ENCODE measurements at regions of chr20 and their contacts with region 1.

Region 1: GRCh38 chr20:10761232-10761631 is 87.4 kb upstream of the JAG1 start:
- DNase-seq: peak; percentile 97
- H3K4me3 Mint-ChIP-seq: peak overlapping the region; percentile 37
- H3K27ac Mint-ChIP-seq: no peak overlapping the region
- H3K4me1 Mint-ChIP-seq: peaks cover 18% of the 10 kb centered on the region
- H3K27me3 Mint-ChIP-seq: no peaks in the 10 kb centered on the region
- CTCF ChIP-seq: no peak

Region 2: DNA sequence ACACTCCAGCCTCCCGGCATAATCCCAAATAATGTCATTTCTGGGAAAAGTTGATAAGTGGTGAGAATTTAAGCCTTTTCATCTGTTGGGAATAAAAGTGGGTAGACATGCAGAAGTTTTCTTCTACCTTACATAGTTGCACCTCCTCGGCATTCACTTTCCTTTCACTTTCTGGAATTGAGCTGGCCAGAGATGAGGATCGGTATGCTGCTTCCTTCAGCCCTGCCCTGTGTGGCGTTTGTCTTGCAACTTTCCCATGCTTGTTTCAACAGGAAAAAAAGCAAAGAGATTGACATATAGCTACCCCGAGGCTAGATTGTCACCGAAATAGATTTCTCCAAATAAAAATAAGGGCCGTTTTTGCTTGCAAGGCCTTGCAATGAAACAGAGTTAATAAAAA is 21.7 kb before region 1 on chr20:
- CTCF ChIA-PET with region 1: interaction called, 4 read pairs
- POLR2A ChIA-PET with region 1: interaction called, 15 read pairs
- intact Hi-C with region 1: no loop called
- DNase-seq: peak; percentile 56
- H3K4me3 Mint-ChIP-seq: peak overlapping the region; percentile 67
- H3K27ac Mint-ChIP-seq: peak overlapping the region; percentile 81
- H3K4me1 Mint-ChIP-seq: peaks cover 6% of the 10 kb centered on the region
- H3K27me3 Mint-ChIP-seq: no peaks in the 10 kb centered on the region
- CTCF ChIP-seq: no peak

Region 3: GRCh38 chr20:10832141-10832540 is 70.9 kb after region 1 on chr20:
- CTCF ChIA-PET with region 1: no interaction called
- POLR2A ChIA-PET with region 1: no interaction called
- intact Hi-C with region 1: no loop called
- DNase-seq: no peak
- H3K4me3 Mint-ChIP-seq: no peak overlapping the region
- H3K27ac Mint-ChIP-seq: no peak overlapping the region
- H3K4me1 Mint-ChIP-seq: no peaks in the 10 kb centered on the region
- H3K27me3 Mint-ChIP-seq: no peaks in the 10 kb centered on the region
- CTCF ChIP-seq: no peak